PC-9 (cell line): ENCODE measurements at regions of chr1 and their contacts with region 1.

Region 1: GRCh38 chr1:227071895-227072587 is 131.9 kb downstream of the COQ8A start:
- DNase-seq: no peak
- H3K4me3 ChIP-seq: no peak overlapping the region
- H3K27ac ChIP-seq: no peak overlapping the region
- H3K4me1 ChIP-seq: no peaks in the 10 kb centered on the region
- H3K27me3 ChIP-seq: no peaks in the 10 kb centered on the region
- CTCF ChIP-seq: no peak

Region 2: GRCh38 chr1:227058321-227058751 is 13.7 kb before region 1 on chr1:
- CTCF ChIA-PET with region 1: no interaction called
- POLR2A ChIA-PET with region 1: no interaction called
- intact Hi-C with region 1: no loop called
- DNase-seq: no peak
- H3K4me3 ChIP-seq: no peak overlapping the region
- H3K27ac ChIP-seq: no peak overlapping the region
- H3K4me1 ChIP-seq: no peaks in the 10 kb centered on the region
- H3K27me3 ChIP-seq: no peaks in the 10 kb centered on the region
- CTCF ChIP-seq: no peak

Region 3: DNA sequence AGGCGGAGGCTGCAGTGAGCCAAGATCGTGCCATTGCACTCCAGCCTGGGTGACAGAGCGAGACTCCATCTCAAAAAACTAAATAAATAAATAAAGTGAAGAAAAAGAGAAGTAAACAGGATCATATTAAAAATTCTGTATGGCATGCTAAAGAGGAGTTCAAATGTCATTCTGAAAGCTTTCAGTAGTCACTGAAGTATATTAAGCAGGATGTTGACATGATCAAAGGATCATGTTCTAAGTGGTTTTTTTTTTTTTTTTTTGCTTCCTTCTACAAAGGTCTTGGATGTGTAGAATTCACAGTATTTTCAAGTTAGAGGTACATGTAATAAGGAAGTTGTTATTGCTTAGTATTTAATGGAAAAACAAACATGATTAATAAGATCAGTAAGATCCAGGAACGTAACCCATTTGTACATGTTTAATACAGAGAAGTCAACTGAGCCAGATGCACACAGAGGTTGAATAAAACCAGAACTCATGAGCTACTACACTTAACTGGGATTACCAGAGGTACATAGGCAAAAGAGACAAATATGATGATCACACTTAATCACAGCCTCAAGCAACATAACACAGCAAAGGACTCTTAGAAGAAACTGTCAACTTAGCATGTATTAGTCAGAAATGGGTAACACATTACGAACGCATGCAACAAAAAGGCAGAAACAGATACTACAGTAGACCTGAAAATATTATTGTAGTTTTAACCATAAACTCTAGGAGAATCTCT is 234.0 kb after region 1 on chr1:
- CTCF ChIA-PET with region 1: no interaction called
- POLR2A ChIA-PET with region 1: interaction called, 15 read pairs
- intact Hi-C with region 1: no loop called
- DNase-seq: no peak
- H3K4me3 ChIP-seq: no peak overlapping the region
- H3K27ac ChIP-seq: no peak overlapping the region
- H3K4me1 ChIP-seq: no peaks in the 10 kb centered on the region; the same call in 1 of the 2 replicates
- H3K27me3 ChIP-seq: no peaks in the 10 kb centered on the region
- CTCF ChIP-seq: no peak